ENCODE measurements at regions of chr3 and their contacts with region 1.

Region 1: DNA sequence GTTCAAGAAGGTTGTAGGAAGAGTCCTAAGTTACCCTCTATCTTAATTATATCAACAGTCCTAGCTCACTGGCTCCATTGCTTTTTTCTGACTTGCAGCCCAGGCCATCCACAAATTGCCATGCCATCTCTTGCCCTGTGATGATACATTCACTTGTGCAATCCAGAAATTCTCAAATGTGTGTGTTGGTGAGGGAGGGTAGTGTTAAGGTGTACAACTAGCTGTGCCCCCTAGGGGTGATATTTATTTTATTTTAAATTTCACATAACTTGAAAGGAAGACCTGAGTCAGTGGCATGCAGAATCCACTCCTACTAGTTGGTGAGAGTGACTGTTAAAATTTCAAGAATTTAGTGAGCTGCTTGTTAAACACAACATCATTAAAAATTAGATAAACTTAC is 156.1 kb upstream of the ANKRD28 start:
- DNase-seq: no peak
- ATAC-seq: no peak

Region 2: GRCh38 chr3:15859507-15860013 is 94.3 kb before region 1 on chr3:
- intact Hi-C with region 1: loop called (anchors 10 kb)
- DNase-seq: peak; percentile 92
- ATAC-seq: peak; percentile 95

Region 3: DNA sequence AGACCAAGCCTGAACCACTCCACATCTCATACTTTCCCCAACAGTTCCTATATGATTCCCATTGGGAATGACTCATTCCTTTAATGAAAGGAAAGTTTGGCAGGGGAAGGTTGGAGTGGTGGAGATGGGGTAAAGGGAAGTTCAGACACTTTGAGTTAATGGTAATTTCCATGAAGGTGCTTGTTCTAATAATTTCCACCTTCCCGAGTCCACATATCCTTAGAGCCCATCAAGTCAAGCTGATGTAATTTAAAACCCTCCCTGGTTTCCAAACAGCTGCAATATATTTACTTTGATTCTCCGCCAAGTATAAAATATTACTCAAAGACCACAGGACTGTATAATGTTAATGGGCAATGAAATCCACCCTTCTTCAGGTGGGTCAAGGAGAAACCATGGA is 125.7 kb after region 1 on chr3:
- intact Hi-C with region 1: no loop called
- DNase-seq: no peak
- ATAC-seq: no peak

Region 4: GRCh38 chr3:16203031-16203430 is 249.2 kb after region 1 on chr3:
- intact Hi-C with region 1: no loop called
- DNase-seq: no peak
- ATAC-seq: no peak

Region 5: DNA sequence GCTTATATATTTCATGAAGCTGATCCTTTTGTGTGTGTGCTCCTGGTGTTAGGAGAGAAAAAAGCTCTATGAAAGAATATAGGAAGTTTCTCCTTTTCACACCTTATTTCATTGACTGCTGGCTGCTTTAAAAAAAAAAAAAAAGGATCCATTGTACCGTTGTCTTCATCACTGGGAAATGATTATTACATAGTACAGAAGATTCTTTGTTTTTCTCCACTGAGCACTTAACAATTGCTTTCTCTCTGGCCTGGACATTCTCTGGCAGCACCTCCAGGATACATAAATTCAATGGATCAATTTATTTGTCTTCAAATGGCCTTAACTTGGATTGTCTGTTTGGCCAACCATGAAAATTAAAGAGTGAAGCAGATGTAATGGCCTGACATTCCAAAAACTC is 273.7 kb after region 1 on chr3:
- intact Hi-C with region 1: no loop called
- DNase-seq: no peak
- ATAC-seq: no peak